ENCODE measurements at regions of chr1 and their contacts with region 1.

Region 1: GRCh38 chr1:231590453-231591198 is 36.0 kb upstream of the DISC1 start:
- DNase-seq: peak in 5 of 9 donors; percentile 24 to 43 (median 31)
- ATAC-seq: peak; percentile 83
- H3K4me3 ChIP-seq: no peak overlapping the region
- H3K4me3 Mint-ChIP-seq: no peak overlapping the region
- H3K27ac ChIP-seq: no peak overlapping the region
- H3K27ac Mint-ChIP-seq: no peak overlapping the region
- H3K4me1 ChIP-seq: no peaks in the 10 kb centered on the region
- H3K4me1 Mint-ChIP-seq: peaks cover 3 to 10% (median 6%) of the 10 kb centered on the region in 7 donors
- H3K27me3 ChIP-seq: no peaks in the 10 kb centered on the region
- H3K27me3 Mint-ChIP-seq: peaks cover 0 to 6% (median 0%) of the 10 kb centered on the region in 5 donors

Region 2: DNA sequence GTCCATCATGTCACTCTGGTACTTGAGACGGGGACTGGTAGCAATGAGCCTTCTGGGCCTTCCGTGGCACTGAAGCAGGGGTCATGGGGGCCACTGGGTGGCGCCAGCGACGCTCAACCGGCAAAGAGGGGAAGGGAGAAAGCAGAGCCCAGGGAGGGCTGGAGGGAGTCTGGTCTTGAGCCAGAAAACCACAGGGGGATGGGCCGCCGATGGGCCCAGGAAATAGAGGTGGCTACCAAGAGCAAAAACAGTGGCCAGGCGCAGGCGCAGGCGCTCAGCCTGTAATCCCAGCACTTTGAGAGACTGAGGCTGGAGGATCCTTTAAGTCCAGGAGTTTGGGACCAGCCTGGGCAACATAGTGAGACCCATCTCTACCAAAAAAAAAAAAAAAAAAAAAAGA is 274.7 kb before region 1 on chr1:
- CTCF ChIA-PET with region 1: no interaction called
- POLR2A ChIA-PET with region 1: no interaction called
- intact Hi-C with region 1: loop called (anchors 1 kb)
- DNase-seq: peak in 5 of 9 donors; percentile 11 to 43 (median 19)
- ATAC-seq: peak; percentile 68
- H3K4me3 ChIP-seq: no peak overlapping the region
- H3K4me3 Mint-ChIP-seq: no peak overlapping the region
- H3K27ac ChIP-seq: no peak overlapping the region
- H3K27ac Mint-ChIP-seq: peak overlapping the region in 1 of 9 donors; percentile 76
- H3K4me1 ChIP-seq: no peaks in the 10 kb centered on the region
- H3K4me1 Mint-ChIP-seq: peaks cover 0 to 4% (median 0%) of the 10 kb centered on the region in 7 donors
- H3K27me3 ChIP-seq: no peaks in the 10 kb centered on the region
- H3K27me3 Mint-ChIP-seq: peaks cover 0 to 4% (median 0%) of the 10 kb centered on the region in 5 donors

Measured in naive thymus-derived CD4-positive, alpha-beta T cell (primary cell).